Sigmoid colon (tissue), 7 donors: ENCODE measurements at regions of chr15 and their contacts with region 1.

Region 1: DNA sequence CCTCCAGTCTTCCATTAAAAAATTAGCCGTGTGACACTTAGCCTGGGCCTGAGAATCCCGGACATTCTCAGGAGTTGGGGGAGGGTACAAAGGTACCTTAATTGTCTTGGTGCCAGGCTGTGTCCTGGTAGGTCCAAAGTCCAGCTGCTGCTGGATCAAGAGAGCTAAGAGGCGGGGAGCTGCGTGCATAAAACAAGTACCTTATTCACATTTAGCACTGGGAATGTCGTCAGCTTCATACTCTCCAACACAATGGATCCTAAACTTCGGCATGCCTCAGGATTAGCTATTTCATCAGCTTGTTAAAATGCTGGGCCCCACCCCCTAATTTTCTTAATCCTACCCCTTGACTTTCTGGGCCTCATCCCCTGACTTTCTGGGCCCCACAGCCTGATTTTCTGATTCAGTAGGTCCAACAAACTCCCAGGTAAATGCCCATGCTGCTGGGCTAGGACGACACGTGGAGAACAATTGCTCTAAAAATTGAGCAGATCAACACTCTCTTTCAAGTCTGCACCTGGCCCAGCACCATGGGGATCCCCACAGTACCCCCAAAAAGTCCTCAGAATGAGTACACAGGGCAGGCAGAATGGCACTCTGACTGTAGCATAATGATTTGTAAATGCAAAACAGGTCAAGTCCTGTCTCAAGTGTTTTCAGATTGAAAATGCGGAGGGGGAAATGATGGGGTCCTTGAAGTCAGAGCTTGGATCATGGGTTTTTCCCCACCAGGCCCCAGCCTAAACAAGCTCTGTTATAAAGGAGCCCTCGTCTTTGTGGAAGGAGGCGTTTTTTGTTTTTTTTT is 5.6 kb upstream of the AEN start:
- DNase-seq: no peak
- H3K4me3 ChIP-seq: no peak overlapping the region
- H3K27ac ChIP-seq: no peak overlapping the region
- H3K4me1 ChIP-seq: peaks cover 0 to under 1% (median under 1%) of the 10 kb centered on the region in 4 donors
- H3K27me3 ChIP-seq: peaks cover 0 to 3% (median 0%) of the 10 kb centered on the region in 3 donors
- CTCF ChIP-seq: no peak
- EP300 ChIP-seq: no peak
- POLR2A ChIP-seq: no peak

Region 2: DNA sequence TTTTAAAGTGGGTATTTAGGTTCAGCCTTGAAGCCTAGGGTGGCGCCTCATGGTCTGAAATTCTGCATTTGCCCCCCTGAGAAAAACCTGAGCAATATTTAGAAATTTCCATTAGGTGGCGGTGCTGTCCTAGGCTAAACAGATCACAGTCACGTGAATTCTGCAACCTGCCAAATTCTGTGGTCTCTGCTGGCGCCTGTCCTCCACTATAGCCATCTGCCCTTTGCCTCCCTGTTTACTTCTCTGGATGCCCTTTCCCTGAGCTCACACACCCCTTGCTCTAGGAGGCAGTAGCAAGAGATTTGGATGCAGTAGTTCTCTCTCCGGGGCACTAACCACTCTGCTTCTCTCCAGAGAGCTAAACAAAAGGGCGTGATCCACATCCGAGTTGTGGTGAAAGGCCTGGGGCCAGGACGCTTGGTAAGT is 138.9 kb before region 1 on chr15:
- intact Hi-C with region 1: loop called (anchors 2 kb)
- DNase-seq: no peak
- H3K4me3 ChIP-seq: no peak overlapping the region
- H3K27ac ChIP-seq: peak overlapping the region in 3 of 4 donors; percentile 5 to 67 (median 53)
- H3K4me1 ChIP-seq: peaks cover 0 to 9% (median 6%) of the 10 kb centered on the region in 4 donors
- H3K27me3 ChIP-seq: no peaks in the 10 kb centered on the region
- CTCF ChIP-seq: peak; percentile 30 to 64 (median 50)
- EP300 ChIP-seq: no peak
- POLR2A ChIP-seq: no peak

Region 3: DNA sequence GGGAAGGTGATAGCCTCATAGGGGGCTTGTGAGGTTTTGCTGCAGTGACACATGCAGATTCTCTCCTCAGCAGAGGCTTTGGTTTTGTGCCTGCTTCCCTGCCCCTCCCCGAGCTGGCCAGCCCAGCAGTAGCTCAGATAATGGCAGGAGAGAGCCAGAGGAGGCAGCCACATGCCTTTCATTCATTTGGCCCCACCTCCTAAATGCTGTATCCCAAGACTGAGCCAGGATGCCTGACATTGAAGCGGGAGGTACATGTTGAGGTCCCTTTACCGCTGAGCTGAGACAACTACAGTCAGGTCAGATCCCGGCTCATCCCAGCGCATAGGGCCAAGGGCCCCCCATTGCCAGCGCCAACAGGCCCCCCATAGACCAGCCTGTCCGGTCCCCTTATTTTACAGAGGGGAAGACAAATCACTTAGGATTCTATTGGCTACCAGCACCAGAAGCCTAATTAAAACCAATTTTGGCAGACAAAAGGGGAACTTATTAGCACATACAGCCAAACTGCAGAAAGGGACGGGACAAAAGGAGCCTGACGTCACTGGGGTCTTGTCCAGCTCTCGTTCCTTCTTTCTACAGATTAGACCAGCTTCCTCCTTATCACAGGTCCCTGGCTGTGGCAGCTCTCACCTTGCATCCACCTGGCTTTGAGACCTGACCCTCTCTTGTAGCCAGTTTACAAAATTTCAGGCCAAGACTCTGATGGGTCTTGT is 731.2 kb after region 1 on chr15:
- intact Hi-C with region 1: no loop called
- DNase-seq: no peak
- H3K4me3 ChIP-seq: no peak overlapping the region
- H3K27ac ChIP-seq: no peak overlapping the region
- H3K4me1 ChIP-seq: no peaks in the 10 kb centered on the region
- H3K27me3 ChIP-seq: peaks cover 0 to 36% (median 0%) of the 10 kb centered on the region in 3 donors
- CTCF ChIP-seq: no peak
- EP300 ChIP-seq: no peak
- POLR2A ChIP-seq: no peak